ENCODE measurements at regions of chr19 and their contacts with region 1.

Region 1: DNA sequence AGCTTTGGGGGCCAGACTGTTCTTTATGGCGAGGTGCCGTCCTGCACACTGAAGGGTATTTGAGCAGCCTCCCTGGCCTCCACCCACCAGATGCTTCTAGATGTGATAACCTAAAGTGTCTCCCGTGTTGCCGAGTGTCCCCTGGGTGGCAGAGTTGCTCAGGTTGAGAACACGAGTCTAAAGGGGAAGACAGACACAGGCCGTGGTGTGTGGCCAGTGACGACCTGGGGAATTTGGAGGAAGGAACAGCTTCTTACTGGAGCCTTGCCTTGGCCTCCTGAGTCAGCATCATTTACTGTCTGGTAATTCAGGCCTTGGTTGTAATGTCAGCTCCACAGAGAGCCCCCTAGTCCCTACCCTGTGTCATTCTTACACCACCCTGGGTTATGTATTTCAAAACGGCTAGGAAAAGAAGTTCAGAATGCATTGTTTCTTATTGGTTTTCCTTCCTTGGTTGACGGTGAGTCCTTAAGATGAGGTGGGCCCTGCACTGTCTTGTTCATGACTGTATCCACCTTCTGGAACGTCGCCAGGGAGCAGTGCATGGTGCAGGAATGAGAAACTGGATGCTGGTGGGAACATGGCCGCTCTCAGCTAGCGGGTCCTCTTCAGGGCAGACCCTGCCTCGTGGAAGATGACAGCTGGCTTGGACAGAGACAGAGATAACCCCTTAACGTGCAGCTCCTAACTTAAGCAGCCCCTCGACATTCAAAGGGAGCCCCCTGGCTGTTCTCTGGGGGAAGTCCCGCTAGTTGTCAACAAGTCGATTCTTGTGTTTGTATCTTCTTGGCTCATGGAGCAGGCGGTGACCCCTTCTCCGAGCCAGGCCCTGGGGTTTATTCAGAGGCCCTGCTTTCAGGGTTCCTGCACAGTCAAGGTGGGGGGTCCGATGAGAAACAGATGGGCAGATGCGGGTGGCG is 7.2 kb downstream of the SIN3B start:
- DNase-seq: peak; percentile 46
- ATAC-seq: peak; percentile 95
- H3K4me3 ChIP-seq: no peak overlapping the region
- H3K27ac ChIP-seq: peak overlapping the region; percentile 49
- H3K4me1 ChIP-seq: peaks cover 27% of the 10 kb centered on the region
- H3K27me3 ChIP-seq: no peaks in the 10 kb centered on the region
- CTCF ChIP-seq: peak; percentile 51 to 85 (median 61)
- EP300 ChIP-seq: no peak; a peak in 1 of 4 replicates
- POLR2A ChIP-seq: peak; percentile 49
- RAD21 ChIP-seq: peak; percentile 69

Region 2: GRCh38 chr19:16778796-16779411 is 57.5 kb before region 1 on chr19:
- CTCF ChIA-PET with region 1: no interaction called
- POLR2A ChIA-PET with region 1: no interaction called
- RAD21 ChIA-PET with region 1: no interaction called
- SMC1A ChIA-PET with region 1: no interaction called
- in situ Hi-C with region 1: no loop called
- intact Hi-C with region 1: no loop called
- DNase-seq: peak; percentile 26
- ATAC-seq: peak; percentile 86
- H3K4me3 ChIP-seq: no peak overlapping the region
- H3K27ac ChIP-seq: no peak overlapping the region
- H3K4me1 ChIP-seq: no peaks in the 10 kb centered on the region
- H3K27me3 ChIP-seq: no peaks in the 10 kb centered on the region
- CTCF ChIP-seq: peak; percentile 71 to 75 (median 74)
- EP300 ChIP-seq: no peak
- POLR2A ChIP-seq: no peak
- RAD21 ChIP-seq: peak; percentile 83

Region 3: GRCh38 chr19:17052439-17053210 is 216.2 kb after region 1 on chr19:
- CTCF ChIA-PET with region 1: interaction called, 8 read pairs
- POLR2A ChIA-PET with region 1: no interaction called
- RAD21 ChIA-PET with region 1: no interaction called
- SMC1A ChIA-PET with region 1: interaction called, 3 read pairs
- in situ Hi-C with region 1: no loop called
- intact Hi-C with region 1: loop called (anchors 1 kb)
- DNase-seq: no peak
- ATAC-seq: peak; percentile 59; the same call in 2 of the 3 replicates
- H3K4me3 ChIP-seq: no peak overlapping the region
- H3K27ac ChIP-seq: no peak overlapping the region
- H3K4me1 ChIP-seq: no peaks in the 10 kb centered on the region
- H3K27me3 ChIP-seq: no peaks in the 10 kb centered on the region
- CTCF ChIP-seq: peak; percentile 40 to 52 (median 40); a peak in 5 of 6 replicates
- EP300 ChIP-seq: no peak
- POLR2A ChIP-seq: no peak
- RAD21 ChIP-seq: peak; percentile 47

Measured in GM12878 (cell line).